Dendritic cell treated with granulocyte-macrophage colony-stimulating factor and Interleukin-4, amounts not matched to agents 40 ng/mL and 50 ng/mL, for 4 days (primary cell): ENCODE measurements at regions of chr11 and their contacts with region 1.

Region 1: GRCh38 chr11:83374311-83374710 is 88.1 kb upstream of the CCDC90B start:
- H3K4me3 Mint-ChIP-seq: no peak overlapping the region
- H3K27ac Mint-ChIP-seq: no peak overlapping the region
- H3K4me1 Mint-ChIP-seq: no peaks in the 10 kb centered on the region
- H3K27me3 Mint-ChIP-seq: no peaks in the 10 kb centered on the region

Region 2: GRCh38 chr11:83336993-83337392 is 37.3 kb before region 1 on chr11:
- intact Hi-C with region 1: no loop called
- H3K4me3 Mint-ChIP-seq: no peak overlapping the region
- H3K27ac Mint-ChIP-seq: no peak overlapping the region
- H3K4me1 Mint-ChIP-seq: no peaks in the 10 kb centered on the region
- H3K27me3 Mint-ChIP-seq: no peaks in the 10 kb centered on the region

Region 3: GRCh38 chr11:83427501-83427900 is 53.2 kb after region 1 on chr11:
- intact Hi-C with region 1: loop called (anchors 5 kb)
- H3K4me3 Mint-ChIP-seq: no peak overlapping the region
- H3K27ac Mint-ChIP-seq: no peak overlapping the region
- H3K4me1 Mint-ChIP-seq: no peaks in the 10 kb centered on the region
- H3K27me3 Mint-ChIP-seq: no peaks in the 10 kb centered on the region

Region 4: GRCh38 chr11:83540112-83540675 is 165.9 kb after region 1 on chr11:
- intact Hi-C with region 1: no loop called
- H3K4me3 Mint-ChIP-seq: no peak overlapping the region
- H3K27ac Mint-ChIP-seq: no peak overlapping the region
- H3K4me1 Mint-ChIP-seq: no peaks in the 10 kb centered on the region
- H3K27me3 Mint-ChIP-seq: no peaks in the 10 kb centered on the region

Region 5: DNA sequence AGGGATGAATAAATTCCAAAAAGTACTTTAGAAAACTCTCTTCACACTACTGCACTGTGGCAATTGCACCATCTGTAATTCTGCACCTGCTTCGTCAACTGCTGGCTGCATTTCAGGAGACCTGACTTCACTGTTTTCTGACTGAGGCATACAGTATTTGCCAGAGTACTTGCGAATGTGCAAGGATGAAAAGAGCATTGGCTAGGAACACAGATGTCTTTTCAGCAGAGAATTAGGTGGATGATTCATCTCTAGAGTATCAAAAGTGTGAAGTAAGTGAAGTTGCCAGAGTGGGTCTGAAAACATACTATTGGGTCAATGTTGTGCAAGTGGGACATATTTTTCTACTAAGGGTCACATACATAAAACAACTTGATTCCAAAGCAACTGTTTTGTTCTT is 339.4 kb after region 1 on chr11:
- intact Hi-C with region 1: no loop called
- H3K4me3 Mint-ChIP-seq: no peak overlapping the region
- H3K27ac Mint-ChIP-seq: no peak overlapping the region
- H3K4me1 Mint-ChIP-seq: no peaks in the 10 kb centered on the region
- H3K27me3 Mint-ChIP-seq: no peaks in the 10 kb centered on the region